Calu3 (cell line): ENCODE measurements at regions of chr7 and their contacts with region 1.

Region 1: DNA sequence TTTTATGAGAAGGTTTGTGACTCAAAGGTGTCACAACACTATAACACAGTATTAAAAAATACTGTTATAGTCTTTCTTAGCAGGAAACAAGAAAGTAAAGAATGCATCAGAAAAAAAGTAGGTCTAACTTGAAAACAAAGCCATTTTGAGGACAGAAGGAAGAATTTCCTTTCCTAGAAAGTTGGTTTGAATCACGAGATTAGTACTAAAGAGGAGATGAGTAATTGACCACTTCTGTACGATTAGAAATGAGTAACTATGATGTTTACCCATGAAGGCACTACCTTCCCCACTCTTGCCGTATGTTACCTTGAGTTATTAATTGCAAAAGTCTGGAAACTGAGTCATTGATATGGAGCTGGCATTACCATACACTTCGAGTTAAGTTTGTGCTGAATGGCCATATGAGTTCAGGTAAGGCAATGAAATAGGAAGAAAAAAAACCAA is 65.2 kb downstream of the FAM185A start:
- DNase-seq: no peak
- H3K4me3 Mint-ChIP-seq: no peak overlapping the region
- H3K27ac Mint-ChIP-seq: no peak overlapping the region
- H3K4me1 Mint-ChIP-seq: peaks cover 26% of the 10 kb centered on the region
- H3K27me3 Mint-ChIP-seq: no peaks in the 10 kb centered on the region
- CTCF ChIP-seq: no peak

Region 2: GRCh38 chr7:102912742-102913141 is 98.7 kb after region 1 on chr7 and contains the start of gene LRRC17:
- CTCF ChIA-PET with region 1: no interaction called
- intact Hi-C with region 1: loop called (anchors 10 kb)
- DNase-seq: no peak
- H3K4me3 Mint-ChIP-seq: no peak within 1 kb of the TSS
- H3K27ac Mint-ChIP-seq: no peak within 1 kb of the TSS
- H3K4me1 Mint-ChIP-seq: peaks cover 9% of the 10 kb centered on the region
- H3K27me3 Mint-ChIP-seq: no peaks in the 10 kb centered on the region
- CTCF ChIP-seq: no peak
- total RNA-seq, gene LRRC17: 0.32 and 0.42 TPM in 2 replicates